ENCODE measurements at regions of chr11 and their contacts with region 1.

Region 1: GRCh38 chr11:72222907-72223614 is 1.5 kb upstream of the INPPL1 start:
- DNase-seq: peak; percentile 94
- ATAC-seq: peak; percentile 75
- H3K4me3 ChIP-seq: peak overlapping the region; percentile 50 to 91 (median 81)
- H3K4me3 Mint-ChIP-seq: peak overlapping the region; percentile 93
- H3K27ac ChIP-seq: peak overlapping the region; percentile 83 to 89
- H3K27ac Mint-ChIP-seq: peak overlapping the region; percentile 96
- H3K4me1 ChIP-seq: peaks cover 29 to 44% of the 10 kb centered on the region in 2 donors
- H3K4me1 Mint-ChIP-seq: peaks cover 51% of the 10 kb centered on the region
- H3K27me3 ChIP-seq: no peaks in the 10 kb centered on the region
- H3K27me3 Mint-ChIP-seq: no peaks in the 10 kb centered on the region
- CTCF ChIP-seq: peak; percentile 29

Region 2: GRCh38 chr11:71928737-71929452 is 294.2 kb before region 1 on chr11 and contains the start of gene RNF121:
- CTCF ChIA-PET with region 1: interaction called, 4 read pairs
- POLR2A ChIA-PET with region 1: no interaction called
- intact Hi-C with region 1: loop called (anchors 1 kb)
- DNase-seq: peak; percentile 97
- ATAC-seq: peak; percentile 91
- H3K4me3 ChIP-seq: peak within 1 kb of the TSS; percentile 89 to 100 (median 99)
- H3K4me3 Mint-ChIP-seq: peak within 1 kb of the TSS; percentile 96
- H3K27ac ChIP-seq: peak within 1 kb of the TSS; percentile 92 to 93
- H3K27ac Mint-ChIP-seq: peak within 1 kb of the TSS; percentile 98
- H3K4me1 ChIP-seq: peaks cover 35 to 46% of the 10 kb centered on the region in 2 donors
- H3K4me1 Mint-ChIP-seq: peaks cover 59% of the 10 kb centered on the region
- H3K27me3 ChIP-seq: no peaks in the 10 kb centered on the region
- H3K27me3 Mint-ChIP-seq: no peaks in the 10 kb centered on the region
- CTCF ChIP-seq: no peak
- total RNA-seq, gene RNF121: 54.5 and 56.0 TPM in 2 replicates

Region 3: DNA sequence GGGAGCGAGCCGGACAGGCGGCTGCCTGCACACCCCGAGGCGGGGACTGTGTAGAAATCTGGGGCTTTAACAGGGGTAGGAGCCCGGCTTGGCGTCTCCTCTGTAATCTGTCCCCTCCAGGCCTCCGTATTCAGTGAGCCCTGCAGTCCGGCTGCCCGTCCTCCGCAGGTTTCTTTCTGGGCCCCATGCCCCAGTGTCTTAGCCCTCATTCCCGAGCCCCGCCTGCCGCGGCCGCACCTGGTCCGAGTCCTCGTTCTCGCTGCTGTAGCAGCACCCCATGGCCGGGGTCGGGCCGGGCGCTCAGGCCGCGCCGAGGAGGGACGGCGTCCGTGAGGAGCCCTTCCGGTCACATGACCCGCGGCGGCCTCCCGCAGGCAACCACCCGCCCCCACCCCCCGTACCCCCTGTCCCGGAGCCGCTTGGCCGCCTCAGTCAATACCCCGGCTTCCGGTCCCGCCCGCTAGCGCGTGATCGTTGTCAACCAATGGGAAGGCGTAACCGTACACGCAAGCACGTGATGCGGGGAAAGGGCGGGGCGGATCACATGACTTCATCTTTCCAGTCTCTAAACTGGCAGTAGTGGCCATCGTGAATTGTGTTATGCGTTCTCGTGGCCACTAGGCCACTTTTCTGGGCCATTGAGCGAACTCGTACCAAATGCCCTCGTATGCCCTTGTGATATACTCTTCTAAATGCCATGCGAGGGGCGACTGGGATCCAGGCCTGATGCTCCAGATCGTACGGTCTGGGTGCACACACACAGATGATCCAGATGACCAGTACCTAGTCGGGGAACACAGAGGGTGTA is 119.9 kb before region 1 on chr11 and contains the start of gene LAMTOR1:
- CTCF ChIA-PET with region 1: no interaction called
- POLR2A ChIA-PET with region 1: no interaction called
- intact Hi-C with region 1: loop called (anchors 1 kb)
- DNase-seq: peak; percentile 98
- ATAC-seq: peak; percentile 95
- H3K4me3 ChIP-seq: peak within 1 kb of the TSS; percentile 76 to 98 (median 84)
- H3K4me3 Mint-ChIP-seq: peak within 1 kb of the TSS; percentile 95
- H3K27ac ChIP-seq: peak within 1 kb of the TSS; percentile 94 to 96
- H3K27ac Mint-ChIP-seq: peak within 1 kb of the TSS; percentile 99
- H3K4me1 ChIP-seq: peaks cover 29 to 37% of the 10 kb centered on the region in 2 donors
- H3K4me1 Mint-ChIP-seq: peaks cover 41% of the 10 kb centered on the region
- H3K27me3 ChIP-seq: no peaks in the 10 kb centered on the region
- H3K27me3 Mint-ChIP-seq: no peaks in the 10 kb centered on the region
- CTCF ChIP-seq: peak; percentile 20
- total RNA-seq, gene LAMTOR1: 71.0 and 78.4 TPM in 2 replicates

Region 4: GRCh38 chr11:72179804-72180396 is 43.2 kb before region 1 on chr11:
- CTCF ChIA-PET with region 1: interaction called, 20 read pairs
- POLR2A ChIA-PET with region 1: no interaction called
- intact Hi-C with region 1: loop called (anchors 1 kb)
- DNase-seq: no peak
- ATAC-seq: no peak
- H3K4me3 ChIP-seq: no peak overlapping the region
- H3K4me3 Mint-ChIP-seq: no peak overlapping the region
- H3K27ac ChIP-seq: no peak overlapping the region
- H3K27ac Mint-ChIP-seq: no peak overlapping the region
- H3K4me1 ChIP-seq: no peaks in the 10 kb centered on the region
- H3K4me1 Mint-ChIP-seq: peaks cover 1% of the 10 kb centered on the region
- H3K27me3 ChIP-seq: peaks cover 0 to 16% (median 1%) of the 10 kb centered on the region in 4 experiments
- H3K27me3 Mint-ChIP-seq: peaks cover 25% of the 10 kb centered on the region
- CTCF ChIP-seq: no peak

Region 5: DNA sequence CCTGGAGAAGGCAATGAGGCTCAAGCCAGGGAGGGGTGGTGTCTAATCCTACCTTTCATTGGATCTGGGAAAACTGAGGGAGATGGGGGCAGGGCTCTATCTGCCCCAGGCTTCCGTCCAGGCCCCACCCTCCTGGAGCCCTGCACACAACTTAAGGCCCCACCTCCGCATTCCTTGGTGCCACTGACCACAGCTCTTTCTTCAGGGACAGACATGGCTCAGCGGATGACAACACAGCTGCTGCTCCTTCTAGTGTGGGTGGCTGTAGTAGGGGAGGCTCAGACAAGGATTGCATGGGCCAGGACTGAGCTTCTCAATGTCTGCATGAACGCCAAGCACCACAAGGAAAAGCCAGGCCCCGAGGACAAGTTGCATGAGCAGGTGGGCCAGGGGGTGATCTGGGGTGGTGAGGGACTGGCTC is 31.1 kb before region 1 on chr11 and contains the start of gene FOLR1:
- CTCF ChIA-PET with region 1: no interaction called
- POLR2A ChIA-PET with region 1: no interaction called
- intact Hi-C with region 1: no loop called
- DNase-seq: no peak
- ATAC-seq: no peak
- H3K4me3 ChIP-seq: no peak within 1 kb of the TSS
- H3K4me3 Mint-ChIP-seq: no peak within 1 kb of the TSS
- H3K27ac ChIP-seq: no peak within 1 kb of the TSS
- H3K27ac Mint-ChIP-seq: no peak within 1 kb of the TSS
- H3K4me1 ChIP-seq: no peaks in the 10 kb centered on the region
- H3K4me1 Mint-ChIP-seq: no peaks in the 10 kb centered on the region
- H3K27me3 ChIP-seq: no peaks in the 10 kb centered on the region
- H3K27me3 Mint-ChIP-seq: peaks cover 3% of the 10 kb centered on the region
- CTCF ChIP-seq: no peak
- total RNA-seq, gene FOLR1: not detected in 2 replicates

Region 6: DNA sequence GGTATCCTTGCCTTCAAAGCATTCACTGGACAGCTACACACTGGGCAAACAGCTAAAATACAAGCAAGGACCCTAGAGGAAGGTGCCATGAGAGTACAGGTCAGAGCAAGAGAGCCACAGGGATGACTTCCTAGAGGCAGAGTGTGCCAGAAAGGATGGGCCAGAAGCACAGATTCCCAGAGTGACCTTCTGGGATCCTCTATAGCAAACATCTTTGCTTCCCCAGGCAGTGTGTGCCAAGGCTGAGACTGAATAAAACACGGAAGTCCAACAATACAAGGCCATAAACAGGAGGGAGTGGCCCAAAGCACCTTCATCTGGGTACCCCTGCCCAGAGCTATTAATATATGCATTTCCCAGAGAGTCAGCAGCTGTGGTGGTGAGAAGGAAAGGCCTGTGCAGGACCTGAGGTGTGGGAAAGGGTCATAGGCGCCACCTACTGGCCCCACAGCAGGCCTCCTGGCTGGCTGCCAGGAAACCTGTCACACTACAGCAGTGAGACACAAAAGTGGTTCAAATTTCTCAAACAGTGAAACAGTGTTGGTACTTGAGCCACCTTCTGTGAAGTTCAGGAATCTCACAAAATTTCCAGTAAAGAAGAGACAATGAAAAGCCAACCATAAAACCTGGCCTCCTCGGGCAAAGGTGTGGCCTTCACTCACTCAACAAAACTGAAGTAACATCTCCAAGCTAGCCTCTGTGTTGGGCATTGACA is 191.0 kb after region 1 on chr11:
- CTCF ChIA-PET with region 1: interaction called, 3 read pairs
- POLR2A ChIA-PET with region 1: no interaction called
- intact Hi-C with region 1: loop called (anchors 5 kb)
- DNase-seq: peak; percentile 81
- ATAC-seq: no peak
- H3K4me3 ChIP-seq: no peak overlapping the region
- H3K4me3 Mint-ChIP-seq: no peak overlapping the region
- H3K27ac ChIP-seq: no peak overlapping the region
- H3K27ac Mint-ChIP-seq: peak overlapping the region; percentile 60
- H3K4me1 ChIP-seq: peaks cover 12 to 27% of the 10 kb centered on the region in 2 donors
- H3K4me1 Mint-ChIP-seq: peaks cover 43% of the 10 kb centered on the region
- H3K27me3 ChIP-seq: no peaks in the 10 kb centered on the region
- H3K27me3 Mint-ChIP-seq: no peaks in the 10 kb centered on the region
- CTCF ChIP-seq: peak; percentile 81

Region 7: GRCh38 chr11:72814286-72815109 is 591.4 kb after region 1 on chr11 and contains the start of gene ATG16L2:
- CTCF ChIA-PET with region 1: interaction called, 3 read pairs
- POLR2A ChIA-PET with region 1: no interaction called
- intact Hi-C with region 1: loop called (anchors 10 kb)
- DNase-seq: no peak
- ATAC-seq: peak; percentile 80
- H3K4me3 ChIP-seq: peak within 1 kb of the TSS; percentile 94 to 99 (median 98)
- H3K4me3 Mint-ChIP-seq: peak within 1 kb of the TSS; percentile 99
- H3K27ac ChIP-seq: peak within 1 kb of the TSS; percentile 95 to 98
- H3K27ac Mint-ChIP-seq: peak within 1 kb of the TSS; percentile 98
- H3K4me1 ChIP-seq: peaks cover 18 to 36% of the 10 kb centered on the region in 2 donors
- H3K4me1 Mint-ChIP-seq: peaks cover 45% of the 10 kb centered on the region
- H3K27me3 ChIP-seq: no peaks in the 10 kb centered on the region
- H3K27me3 Mint-ChIP-seq: no peaks in the 10 kb centered on the region
- CTCF ChIP-seq: peak; percentile 34
- total RNA-seq, gene ATG16L2: 212 and 228 TPM in 2 replicates

Measured in B cell (primary cell).